H1 (cell line): ENCODE measurements at regions of chr19 and their contacts with region 1.

Region 1: GRCh38 chr19:18919086-18919899 is at the starts of genes COPE and DDX49:
- DNase-seq: peak; percentile 97
- H3K4me3 ChIP-seq: peak within 1 kb of the TSS; percentile 82 to 100 (median 100)
- H3K27ac ChIP-seq: peak within 1 kb of the TSS; percentile 64
- H3K4me1 ChIP-seq: peaks cover 0 to 9% (median 6%) of the 10 kb centered on the region in 4 experiments; a peak in 6 of 7 replicates
- H3K27me3 ChIP-seq: no peaks in the 10 kb centered on the region
- CTCF ChIP-seq: no peak; a peak in 1 of 4 replicates
- EP300 ChIP-seq: no peak
- POLR2A ChIP-seq: peak in 1 of 2 experiments; percentile 97; a peak in 2 of 3 replicates
- RAD21 ChIP-seq: no peak
- total RNA-seq, gene COPE: 178 and 190 TPM in 2 replicates
- total RNA-seq, gene DDX49: 41.3 and 52.3 TPM in 2 replicates

Region 2: DNA sequence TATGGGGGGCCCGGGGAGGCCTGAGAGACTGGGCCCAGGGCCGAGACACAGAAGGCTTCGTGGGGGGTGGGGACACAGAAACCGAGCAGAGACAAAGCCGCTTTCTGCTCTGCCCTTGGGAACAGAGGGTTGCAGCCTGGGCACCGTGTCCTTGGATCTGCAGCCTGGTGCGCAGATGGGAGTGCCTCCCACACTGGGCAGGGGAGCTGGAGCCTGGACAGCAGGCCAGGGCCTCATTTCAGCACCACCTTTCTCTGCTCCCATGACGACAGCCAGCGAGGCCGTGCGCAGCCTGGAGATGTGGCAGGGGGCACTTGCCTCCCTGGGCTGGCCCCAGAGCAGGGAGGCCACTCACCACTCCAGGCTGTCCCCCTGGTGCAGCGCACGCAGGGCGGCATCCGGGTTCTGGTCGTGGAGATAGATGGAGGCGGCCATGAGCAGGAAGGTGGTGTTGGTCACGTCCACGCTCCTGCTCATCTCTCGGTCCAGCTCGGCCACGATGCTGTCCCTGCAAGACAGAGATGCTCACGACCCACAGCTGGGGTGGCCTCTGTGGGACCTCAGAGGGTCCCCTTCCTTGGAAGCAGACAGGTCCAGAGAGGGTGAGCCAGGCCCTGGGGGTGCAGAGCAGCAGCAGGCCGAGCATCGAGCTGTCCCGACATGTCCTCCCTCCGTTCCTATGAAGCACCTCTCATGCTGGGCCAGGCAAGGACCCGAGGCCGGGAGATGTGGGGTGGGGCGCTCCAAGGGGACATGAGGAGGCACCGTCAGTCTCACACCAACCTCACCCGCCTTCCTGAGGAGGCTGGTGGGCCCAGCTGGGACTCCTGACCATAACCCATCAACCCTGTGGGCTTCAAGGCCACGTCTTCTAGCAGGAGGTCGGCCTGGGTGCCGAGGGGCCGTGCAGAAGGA is 12.4 kb before region 1 on chr19:
- CTCF ChIA-PET with region 1: interaction called, 13 read pairs
- POLR2A ChIA-PET with region 1: interaction called, 21 read pairs
- DNase-seq: no peak
- H3K4me3 ChIP-seq: no peak overlapping the region
- H3K27ac ChIP-seq: no peak overlapping the region
- H3K4me1 ChIP-seq: no peaks in the 10 kb centered on the region
- H3K27me3 ChIP-seq: no peaks in the 10 kb centered on the region
- CTCF ChIP-seq: no peak
- EP300 ChIP-seq: no peak
- POLR2A ChIP-seq: no peak
- RAD21 ChIP-seq: no peak

Region 3: GRCh38 chr19:18932216-18932841 is 13.0 kb after region 1 on chr19:
- CTCF ChIA-PET with region 1: interaction called, 5 read pairs
- POLR2A ChIA-PET with region 1: interaction called, 94 read pairs
- DNase-seq: peak; percentile 95 to 99
- H3K4me3 ChIP-seq: peak overlapping the region; percentile 33 to 63 (median 48); a peak in 7 of 8 replicates
- H3K27ac ChIP-seq: no peak overlapping the region
- H3K4me1 ChIP-seq: peaks cover 0 to 10% (median 5%) of the 10 kb centered on the region in 4 experiments; a peak in 6 of 7 replicates
- H3K27me3 ChIP-seq: no peaks in the 10 kb centered on the region
- CTCF ChIP-seq: no peak
- EP300 ChIP-seq: no peak
- POLR2A ChIP-seq: no peak
- RAD21 ChIP-seq: no peak